ENCODE measurements at regions of chr4 and their contacts with region 1.

Region 1: GRCh38 chr4:123488916-123489315 is 92.3 kb downstream of the SPRY1 start:
- DNase-seq: no peak
- H3K4me3 Mint-ChIP-seq: peak overlapping the region; percentile 32
- H3K27ac Mint-ChIP-seq: peak overlapping the region; percentile 72
- H3K4me1 Mint-ChIP-seq: peaks cover 9% of the 10 kb centered on the region
- H3K27me3 Mint-ChIP-seq: peaks cover 2% of the 10 kb centered on the region

Region 2: GRCh38 chr4:123312951-123313592 is 175.8 kb before region 1 on chr4:
- intact Hi-C with region 1: no loop called
- DNase-seq: no peak
- H3K4me3 Mint-ChIP-seq: no peak overlapping the region
- H3K27ac Mint-ChIP-seq: no peak overlapping the region
- H3K4me1 Mint-ChIP-seq: no peaks in the 10 kb centered on the region
- H3K27me3 Mint-ChIP-seq: no peaks in the 10 kb centered on the region

Region 3: DNA sequence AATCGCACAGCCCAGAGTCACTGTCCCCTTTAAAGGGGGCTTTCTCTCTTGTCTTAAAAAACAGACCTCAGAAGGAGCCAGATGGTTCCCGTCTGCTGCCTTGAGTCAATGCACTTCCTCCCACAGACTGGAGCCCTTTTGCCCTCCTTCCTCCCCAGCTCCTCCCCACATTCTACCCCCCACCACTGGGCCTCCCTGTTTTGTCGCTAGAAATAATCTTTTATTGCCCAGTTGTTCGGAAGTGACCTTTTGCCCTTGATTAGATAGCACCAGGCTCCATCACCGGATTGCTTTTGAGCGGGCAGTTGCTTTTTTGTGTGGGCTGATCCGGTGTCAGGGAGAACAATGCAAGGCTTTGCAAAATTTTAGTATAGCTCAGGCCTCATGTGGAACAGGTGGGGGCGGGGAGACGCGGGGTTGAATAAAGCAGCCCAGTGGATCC is 44.6 kb before region 1 on chr4:
- intact Hi-C with region 1: loop called (anchors 1 kb)
- DNase-seq: peak; percentile 20
- H3K4me3 Mint-ChIP-seq: peak overlapping the region; percentile 48
- H3K27ac Mint-ChIP-seq: peak overlapping the region; percentile 94
- H3K4me1 Mint-ChIP-seq: peaks cover 35% of the 10 kb centered on the region
- H3K27me3 Mint-ChIP-seq: no peaks in the 10 kb centered on the region

Measured in activated T-helper 1 cell treated with anti-CD3 and anti-CD28 coated beads, Interleukin-12 subunit alpha, Interleukin-12 subunit beta, Interleukin-2, Interleukin-4 antibody, amounts not matched to agents 30 ng/mL and 10 ng/mL and 1 ng/mL, durations not matched to agents 14 hours and 24 hours and 36 hours (primary cell).